ENCODE measurements at regions of chr18 and their contacts with region 1.

Region 1: GRCh38 chr18:686339-687111 is 25.9 kb downstream of the ENOSF1 start:
- DNase-seq: no peak
- ATAC-seq: peak; percentile 13; the same call in 2 of the 3 replicates
- H3K4me3 ChIP-seq: no peak overlapping the region
- H3K27ac ChIP-seq: no peak overlapping the region
- H3K4me1 ChIP-seq: peaks cover 0 to 11% of the 10 kb centered on the region in 2 experiments; a peak in 3 of 5 replicates
- H3K27me3 ChIP-seq: no peaks in the 10 kb centered on the region
- CTCF ChIP-seq: no peak
- EP300 ChIP-seq: no peak
- POLR2A ChIP-seq: no peak; the same call in 1 of the 2 replicates
- RAD21 ChIP-seq: no peak

Region 2: GRCh38 chr18:629269-630150 is 57.0 kb before region 1 on chr18:
- CTCF ChIA-PET with region 1: no interaction called
- POLR2A ChIA-PET with region 1: interaction called, 3 read pairs
- in situ Hi-C with region 1: loop called (anchors 5 kb)
- intact Hi-C with region 1: no loop called
- DNase-seq: peak in 1 of 4 experiments; percentile 44
- ATAC-seq: peak; percentile 83
- H3K4me3 ChIP-seq: no peak overlapping the region
- H3K27ac ChIP-seq: peak overlapping the region; percentile 25; the same call in 1 of the 3 replicates
- H3K4me1 ChIP-seq: peaks cover 0 to 10% of the 10 kb centered on the region in 2 experiments; a peak in 4 of 5 replicates
- H3K27me3 ChIP-seq: no peaks in the 10 kb centered on the region
- CTCF ChIP-seq: peak; percentile 24 to 49 (median 37); a peak in 4 of 6 replicates
- EP300 ChIP-seq: no peak
- POLR2A ChIP-seq: no peak
- RAD21 ChIP-seq: 0 out of 4 replicates have a peak, but pooled peaks of 1 of the 2 experiments have one; percentile 16

Region 3: DNA sequence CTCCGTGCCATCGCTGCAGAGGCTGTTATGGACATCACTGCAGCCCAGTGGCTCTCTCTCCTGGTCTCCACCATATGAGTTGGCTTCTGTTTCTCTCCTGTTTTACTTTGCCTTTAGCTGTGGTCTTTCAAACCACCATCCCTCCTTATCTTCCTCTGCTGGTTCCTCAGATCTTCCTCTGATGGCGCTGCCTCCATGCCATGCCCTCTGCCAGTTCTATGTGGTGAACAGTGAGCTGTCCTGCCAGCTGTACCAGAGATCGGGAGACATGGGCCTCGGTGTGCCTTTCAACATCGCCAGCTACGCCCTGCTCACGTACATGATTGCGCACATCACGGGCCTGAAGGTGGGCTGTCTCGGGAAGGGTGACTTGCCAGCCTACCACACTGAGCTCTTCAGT is 16.0 kb before region 1 on chr18:
- CTCF ChIA-PET with region 1: interaction called, 4 read pairs
- POLR2A ChIA-PET with region 1: interaction called, 12 read pairs
- in situ Hi-C with region 1: no loop called
- intact Hi-C with region 1: no loop called
- DNase-seq: no peak
- ATAC-seq: no peak
- H3K4me3 ChIP-seq: no peak overlapping the region
- H3K27ac ChIP-seq: no peak overlapping the region
- H3K4me1 ChIP-seq: no peaks in the 10 kb centered on the region; a peak in 1 of 5 replicates
- H3K27me3 ChIP-seq: no peaks in the 10 kb centered on the region
- CTCF ChIP-seq: no peak
- EP300 ChIP-seq: no peak
- POLR2A ChIP-seq: peak; percentile 61
- RAD21 ChIP-seq: no peak

Region 4: GRCh38 chr18:703213-703967 is 16.9 kb after region 1 on chr18:
- CTCF ChIA-PET with region 1: no interaction called
- POLR2A ChIA-PET with region 1: interaction called, 10 read pairs
- in situ Hi-C with region 1: no loop called
- intact Hi-C with region 1: no loop called
- DNase-seq: no peak
- ATAC-seq: peak; percentile 47
- H3K4me3 ChIP-seq: no peak overlapping the region
- H3K27ac ChIP-seq: peak overlapping the region; percentile 29; the same call in 1 of the 3 replicates
- H3K4me1 ChIP-seq: 0 out of 5 replicates have a peak, but pooled peaks cover 0 to 8% of the 10 kb centered on the region in 2 experiments
- H3K27me3 ChIP-seq: no peaks in the 10 kb centered on the region
- CTCF ChIP-seq: no peak
- EP300 ChIP-seq: no peak
- POLR2A ChIP-seq: 0 out of 2 replicates have a peak, but pooled peaks have one; percentile 23
- RAD21 ChIP-seq: no peak